Activated CD4-positive, alpha-beta memory T cell treated with anti-CD3 and anti-CD28 coated beads for 36 hours (primary cell): ENCODE measurements at regions of chr13 and their contacts with region 1.

Region 1: GRCh38 chr13:26186118-26186870 is 35.8 kb downstream of the RNF6 start:
- DNase-seq: peak; percentile 93
- H3K4me3 Mint-ChIP-seq: peak overlapping the region; percentile 86
- H3K27ac Mint-ChIP-seq: peak overlapping the region; percentile 95
- H3K4me1 Mint-ChIP-seq: peaks cover 21% of the 10 kb centered on the region
- H3K27me3 Mint-ChIP-seq: no peaks in the 10 kb centered on the region

Region 2: DNA sequence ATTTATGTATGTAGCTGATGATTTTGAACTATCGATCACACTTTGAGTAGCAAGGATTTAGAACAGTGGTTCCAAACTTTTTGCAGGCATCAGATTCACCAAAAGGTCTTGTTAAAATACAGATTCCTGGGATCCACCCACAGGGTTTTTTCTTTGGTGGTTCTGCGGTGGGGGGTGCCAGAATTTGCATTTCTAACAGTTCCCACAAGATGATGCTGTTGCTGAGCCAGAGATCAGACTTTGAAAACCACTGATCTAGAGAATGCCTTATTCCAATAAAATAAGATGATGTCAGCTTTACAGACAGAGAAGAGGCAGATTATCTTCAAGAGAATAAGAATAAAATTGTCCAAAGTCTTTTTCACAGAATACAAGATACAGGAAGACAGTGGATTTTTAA is 53.5 kb before region 1 on chr13:
- CTCF ChIA-PET with region 1: no interaction called
- POLR2A ChIA-PET with region 1: no interaction called
- intact Hi-C with region 1: no loop called
- DNase-seq: peak; percentile 10
- H3K4me3 Mint-ChIP-seq: no peak overlapping the region
- H3K27ac Mint-ChIP-seq: no peak overlapping the region
- H3K4me1 Mint-ChIP-seq: no peaks in the 10 kb centered on the region
- H3K27me3 Mint-ChIP-seq: peaks cover 8% of the 10 kb centered on the region

Region 3: DNA sequence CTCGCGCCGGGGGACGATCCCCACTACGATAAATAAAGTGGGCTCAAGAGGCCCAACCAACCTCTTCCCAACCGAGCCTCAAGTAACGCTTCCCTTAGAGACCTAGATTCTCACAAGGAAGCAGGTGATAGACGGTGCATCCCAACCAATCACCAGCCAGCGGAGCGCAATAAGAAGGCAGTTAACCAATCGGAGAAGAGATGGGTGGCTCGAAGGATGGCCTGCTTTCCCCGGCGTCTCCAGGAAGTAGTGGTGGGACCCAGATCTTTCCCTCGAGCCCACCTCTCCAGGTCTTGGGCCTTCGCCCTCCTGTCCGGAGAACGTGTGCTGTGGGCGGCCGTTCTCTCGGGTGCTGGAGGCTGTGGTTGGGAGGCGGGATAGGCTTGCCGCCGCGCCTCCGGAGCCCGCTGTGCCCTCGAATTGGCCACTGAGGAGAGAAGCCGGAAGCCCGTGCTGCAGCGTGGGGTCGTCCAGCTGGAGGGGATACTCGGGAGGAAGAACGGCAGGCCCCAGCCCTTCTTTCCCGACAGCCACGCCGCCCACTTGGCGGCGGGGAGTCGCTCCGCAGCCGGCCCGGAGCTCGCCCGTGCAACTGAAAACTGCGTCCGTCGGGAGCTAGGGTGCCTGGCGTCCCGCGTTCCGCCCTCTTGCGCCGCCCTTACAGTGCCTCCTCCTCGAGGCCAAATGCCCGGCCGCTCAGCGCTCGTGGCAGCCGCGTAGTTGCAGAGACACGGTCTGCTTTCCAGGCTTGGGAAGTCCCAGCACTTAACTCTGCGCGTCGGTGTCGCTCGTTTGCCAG is 35.6 kb after region 1 on chr13 and contains the start of gene RNF6:
- CTCF ChIA-PET with region 1: interaction called, 73 read pairs
- POLR2A ChIA-PET with region 1: interaction called, 11 read pairs
- intact Hi-C with region 1: loop called (anchors 1 kb)
- DNase-seq: peak; percentile 92
- H3K4me3 Mint-ChIP-seq: peak within 1 kb of the TSS; percentile 94
- H3K27ac Mint-ChIP-seq: peak within 1 kb of the TSS; percentile 100
- H3K4me1 Mint-ChIP-seq: peaks cover 32% of the 10 kb centered on the region
- H3K27me3 Mint-ChIP-seq: no peaks in the 10 kb centered on the region
- total RNA-seq, gene RNF6: 40.7 to 45.0 TPM

Region 4: DNA sequence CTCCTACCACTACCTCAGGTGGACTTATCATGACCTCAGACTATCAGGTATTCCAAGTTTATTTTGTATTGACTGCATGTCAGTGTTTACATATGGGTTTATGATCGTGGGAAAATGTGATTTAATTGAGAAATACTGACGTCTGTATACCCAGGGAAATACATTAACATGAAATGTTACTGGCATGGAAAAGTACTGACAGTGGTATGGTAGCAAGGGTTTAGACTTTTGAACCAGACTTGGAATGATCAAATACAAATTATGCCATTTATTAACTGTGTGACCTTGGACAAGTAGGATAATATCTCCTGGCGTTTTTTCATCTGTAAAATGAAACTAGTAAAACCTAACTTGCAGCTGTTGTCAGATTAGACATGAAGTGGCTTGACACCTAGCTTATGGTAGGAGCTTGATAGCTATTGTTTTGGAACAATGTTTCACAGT is 215.3 kb after region 1 on chr13:
- CTCF ChIA-PET with region 1: interaction called, 11 read pairs
- POLR2A ChIA-PET with region 1: interaction called, 3 read pairs
- intact Hi-C with region 1: loop called (anchors 10 kb)
- DNase-seq: no peak
- H3K4me3 Mint-ChIP-seq: no peak overlapping the region
- H3K27ac Mint-ChIP-seq: no peak overlapping the region
- H3K4me1 Mint-ChIP-seq: peaks cover 7% of the 10 kb centered on the region
- H3K27me3 Mint-ChIP-seq: no peaks in the 10 kb centered on the region

Region 5: DNA sequence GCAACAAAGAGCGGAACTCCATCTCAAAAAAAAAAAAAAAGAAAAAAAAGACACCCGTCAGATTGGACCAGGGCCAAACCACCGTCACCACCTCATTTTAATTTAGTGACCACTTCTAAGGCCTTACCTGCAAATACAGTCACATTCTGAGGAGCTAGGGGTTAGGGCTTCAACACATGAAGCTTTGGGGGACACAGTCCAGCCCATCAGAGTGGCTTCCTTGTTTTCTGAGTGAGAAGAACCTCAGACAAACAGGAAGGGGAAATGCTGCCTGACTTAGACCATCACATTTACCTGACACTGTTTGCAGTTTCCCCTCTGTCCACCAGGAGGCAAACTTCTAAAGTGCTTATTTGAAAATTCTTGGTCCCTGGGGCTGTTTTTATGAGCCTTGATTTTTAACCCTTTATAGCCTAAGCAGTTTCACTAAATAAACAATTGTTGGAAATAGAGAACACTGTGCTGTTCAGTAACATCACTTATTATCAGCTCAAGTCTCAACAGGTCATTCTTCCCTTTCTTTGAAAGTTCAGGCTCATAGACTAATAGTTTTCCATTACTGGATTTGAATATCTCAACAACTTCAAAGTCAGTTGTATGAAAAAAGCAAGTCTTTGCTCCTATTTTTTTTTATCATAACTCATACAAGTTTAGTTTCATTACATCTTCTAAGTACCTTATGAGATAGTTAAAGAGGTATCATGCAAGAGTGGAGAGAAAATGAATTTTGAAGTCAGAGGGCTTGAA is 296.3 kb after region 1 on chr13:
- CTCF ChIA-PET with region 1: interaction called, 22 read pairs
- POLR2A ChIA-PET with region 1: no interaction called
- intact Hi-C with region 1: loop called (anchors 1 kb)
- DNase-seq: peak; percentile 72
- H3K4me3 Mint-ChIP-seq: no peak overlapping the region
- H3K27ac Mint-ChIP-seq: peak overlapping the region; percentile 8
- H3K4me1 Mint-ChIP-seq: peaks cover 13% of the 10 kb centered on the region
- H3K27me3 Mint-ChIP-seq: no peaks in the 10 kb centered on the region

Region 6: DNA sequence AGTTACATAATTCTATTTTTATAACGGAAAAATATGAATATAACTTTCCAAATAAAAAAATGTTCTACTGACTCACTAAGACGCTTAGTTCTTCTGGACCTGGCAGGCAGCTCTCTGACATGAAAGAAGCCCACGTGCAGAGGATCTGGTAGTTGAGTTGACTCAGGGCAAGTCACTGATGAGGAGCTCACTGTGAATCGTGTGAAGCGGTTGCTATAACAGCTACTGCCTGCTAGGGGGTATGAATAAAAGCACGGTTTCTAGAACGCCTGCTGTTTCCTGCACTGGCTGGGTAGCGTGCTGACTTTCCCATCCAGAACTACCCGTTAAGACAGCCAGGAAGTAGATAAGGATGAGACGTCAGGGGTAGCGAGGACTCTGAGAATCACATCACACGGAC is 316.5 kb after region 1 on chr13:
- CTCF ChIA-PET with region 1: interaction called, 164 read pairs
- POLR2A ChIA-PET with region 1: interaction called, 5 read pairs
- intact Hi-C with region 1: no loop called
- DNase-seq: peak; percentile 52
- H3K4me3 Mint-ChIP-seq: no peak overlapping the region
- H3K27ac Mint-ChIP-seq: no peak overlapping the region
- H3K4me1 Mint-ChIP-seq: peaks cover 9% of the 10 kb centered on the region
- H3K27me3 Mint-ChIP-seq: no peaks in the 10 kb centered on the region

Region 7: DNA sequence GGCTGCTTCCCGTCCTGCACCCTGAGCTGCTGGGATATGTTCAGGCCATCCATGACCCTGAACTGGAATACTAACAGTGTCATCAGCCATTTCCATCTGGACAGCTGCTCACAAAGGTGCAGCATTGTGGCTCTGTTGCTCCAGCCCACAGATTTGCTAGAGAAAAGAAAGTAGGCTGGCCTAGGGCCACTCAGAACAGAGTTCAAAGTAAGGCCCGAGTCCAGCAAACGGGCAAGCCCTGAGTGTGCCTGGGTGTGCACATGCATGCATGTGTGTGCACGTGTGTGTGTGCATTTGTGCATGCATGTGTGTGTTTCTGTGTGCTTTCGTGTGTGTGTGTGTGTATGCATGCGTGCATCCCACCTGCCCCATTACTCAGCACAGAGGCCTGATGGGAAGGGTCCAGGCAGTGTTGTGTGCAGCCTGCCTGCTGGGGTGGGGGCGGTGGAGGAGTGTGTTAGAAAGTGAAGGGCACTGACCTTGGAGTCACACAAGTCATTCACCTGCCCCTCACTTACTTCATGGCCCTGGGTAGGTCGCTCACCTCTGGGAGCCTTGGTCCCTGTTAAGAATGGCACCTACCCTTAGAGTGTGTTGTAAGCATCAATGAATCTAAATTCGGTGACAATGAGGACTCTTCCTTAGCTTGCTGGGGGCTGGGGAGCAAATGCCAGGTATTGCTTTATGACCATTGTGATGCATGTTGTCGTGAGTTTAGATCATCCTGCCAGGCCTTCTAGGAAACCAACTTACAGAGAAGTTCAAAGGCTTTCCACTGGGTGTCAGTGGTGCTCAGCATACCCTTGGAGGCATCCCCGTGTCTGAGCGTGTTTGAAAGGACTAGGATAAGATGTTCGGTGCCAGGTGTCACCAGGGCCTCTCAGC is 521.1 kb after region 1 on chr13:
- CTCF ChIA-PET with region 1: interaction called, 12 read pairs
- POLR2A ChIA-PET with region 1: no interaction called
- intact Hi-C with region 1: no loop called
- DNase-seq: peak; percentile 45
- H3K4me3 Mint-ChIP-seq: no peak overlapping the region
- H3K27ac Mint-ChIP-seq: no peak overlapping the region
- H3K4me1 Mint-ChIP-seq: no peaks in the 10 kb centered on the region
- H3K27me3 Mint-ChIP-seq: peaks cover 4% of the 10 kb centered on the region